ENCODE measurements at regions of chr11 and their contacts with region 1.

Region 1: GRCh38 chr11:12963792-12964536 is 45.2 kb upstream of the RASSF10 start:
- DNase-seq: peak; percentile 56 to 70
- ATAC-seq: peak; percentile 72 to 91 (median 85)
- H3K4me3 ChIP-seq: no peak overlapping the region
- H3K27ac ChIP-seq: no peak overlapping the region
- H3K4me1 ChIP-seq: no peaks in the 10 kb centered on the region
- H3K27me3 ChIP-seq: no peaks in the 10 kb centered on the region
- CTCF ChIP-seq: peak; percentile 82

Region 2: DNA sequence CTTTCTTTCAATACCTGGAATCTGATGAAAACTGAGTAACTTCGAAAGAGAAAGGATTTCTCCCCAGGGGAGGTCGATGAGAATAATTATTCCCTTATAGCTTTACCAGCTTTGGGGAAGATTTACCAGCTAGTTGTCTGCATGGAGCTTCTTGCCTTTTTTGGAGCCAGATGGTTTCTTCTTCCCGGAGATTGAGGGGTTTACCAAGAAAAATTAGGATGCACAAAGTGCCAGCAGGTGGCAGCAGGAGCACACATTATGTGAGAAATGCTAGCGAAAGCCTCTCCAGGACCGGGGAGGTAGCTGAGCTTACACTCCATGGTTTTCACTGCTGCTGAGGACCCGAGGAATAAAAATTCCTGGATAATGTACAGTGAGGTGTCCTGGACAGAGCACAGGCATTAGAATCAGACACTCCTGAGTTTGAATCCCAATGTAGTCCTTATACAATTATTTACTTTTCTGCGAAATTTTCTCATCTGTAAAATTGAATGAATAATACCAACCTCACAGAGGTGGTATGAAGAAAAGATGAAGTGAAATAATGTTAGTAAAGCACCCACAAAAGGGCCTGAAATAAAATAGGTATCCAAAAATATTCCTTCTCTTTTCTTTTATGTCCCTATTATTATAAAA is 632.6 kb before region 1 on chr11:
- intact Hi-C with region 1: loop called in 1 of 2 experiments (anchors 5 kb)
- DNase-seq: peak; percentile 79 to 89
- ATAC-seq: peak; percentile 80 to 93 (median 84)
- H3K4me3 ChIP-seq: no peak overlapping the region
- H3K27ac ChIP-seq: no peak overlapping the region
- H3K4me1 ChIP-seq: no peaks in the 10 kb centered on the region
- H3K27me3 ChIP-seq: no peaks in the 10 kb centered on the region
- CTCF ChIP-seq: peak; percentile 82

Region 3: GRCh38 chr11:13008625-13009475 is 44.9 kb after region 1 on chr11 and contains the start of gene RASSF10:
- intact Hi-C with region 1: no loop called
- DNase-seq: peak; percentile 41 to 59
- ATAC-seq: peak; percentile 39 to 81 (median 73)
- H3K4me3 ChIP-seq: peak within 1 kb of the TSS; percentile 65
- H3K27ac ChIP-seq: no peak within 1 kb of the TSS
- H3K4me1 ChIP-seq: peaks cover 17% of the 10 kb centered on the region
- H3K27me3 ChIP-seq: peaks cover 3 to 81% (median 29%) of the 10 kb centered on the region in 3 donors
- CTCF ChIP-seq: no peak
- total RNA-seq, gene RASSF10: 0.26 to 0.49 (median 0.37) TPM

Region 4: DNA sequence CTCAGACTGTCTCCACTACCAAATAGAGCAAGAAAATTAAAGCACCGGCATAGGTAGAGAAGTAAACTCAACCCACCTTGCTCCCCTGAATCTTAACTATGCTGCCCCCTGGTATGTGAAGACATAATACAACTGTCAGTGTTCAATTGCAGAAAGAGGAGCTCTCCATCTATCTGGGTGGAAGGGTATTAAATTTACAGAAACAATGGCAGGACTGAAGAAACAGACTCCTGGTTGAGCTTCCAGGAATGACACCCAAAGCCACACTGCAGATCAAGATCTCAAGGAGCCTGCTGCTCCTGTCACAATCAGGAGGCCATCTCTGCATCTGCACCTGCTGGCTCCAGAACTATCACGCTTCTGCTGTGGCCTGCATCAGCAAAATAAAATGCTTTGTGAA is 181.5 kb after region 1 on chr11:
- intact Hi-C with region 1: loop called (anchors 5 kb)
- DNase-seq: no peak
- ATAC-seq: no peak
- H3K4me3 ChIP-seq: no peak overlapping the region
- H3K27ac ChIP-seq: no peak overlapping the region
- H3K4me1 ChIP-seq: no peaks in the 10 kb centered on the region
- H3K27me3 ChIP-seq: no peaks in the 10 kb centered on the region
- CTCF ChIP-seq: no peak

Region 5: DNA sequence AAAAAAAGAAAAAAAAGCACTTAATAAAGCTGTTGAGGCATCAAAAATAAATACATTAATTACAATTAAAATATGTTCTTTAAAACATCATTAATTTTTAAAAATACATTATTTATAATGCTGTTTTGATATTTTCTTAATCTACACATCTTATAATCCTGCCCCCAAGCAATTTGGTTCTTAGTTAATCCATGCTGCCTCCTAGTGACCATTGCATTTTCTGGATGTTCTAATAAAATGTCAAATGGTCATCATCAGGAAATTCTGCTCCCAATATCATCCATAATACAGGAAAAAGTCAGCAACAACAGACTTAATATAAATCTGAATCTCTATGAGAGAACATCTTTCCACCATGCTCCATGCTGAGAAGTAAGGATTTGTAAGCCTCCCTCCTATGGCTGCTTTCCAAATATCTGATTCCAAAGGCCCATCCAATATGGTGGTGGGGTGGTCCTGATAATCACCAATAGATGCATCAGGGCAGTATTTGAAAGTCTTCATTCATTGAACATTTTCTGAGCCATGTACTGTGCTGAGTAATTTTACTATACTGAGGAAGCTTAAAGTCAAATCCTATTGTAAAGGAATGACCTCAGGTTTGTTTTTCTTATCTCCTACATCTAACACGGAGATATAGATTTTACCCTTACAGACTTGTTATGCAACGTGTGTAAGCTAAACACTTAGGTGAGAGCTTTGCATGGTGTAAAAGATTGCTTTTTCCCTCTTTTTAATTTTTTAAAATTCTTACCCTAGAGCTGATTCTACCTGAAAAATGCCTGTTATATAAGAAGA is 189.0 kb after region 1 on chr11:
- intact Hi-C with region 1: loop called (anchors 5 kb)
- DNase-seq: no peak
- ATAC-seq: no peak
- H3K4me3 ChIP-seq: no peak overlapping the region
- H3K27ac ChIP-seq: no peak overlapping the region
- H3K4me1 ChIP-seq: no peaks in the 10 kb centered on the region
- H3K27me3 ChIP-seq: no peaks in the 10 kb centered on the region
- CTCF ChIP-seq: peak; percentile 21

Region 6: GRCh38 chr11:13183094-13183825 is 219.3 kb after region 1 on chr11:
- intact Hi-C with region 1: loop called in 1 of 2 experiments (anchors 2 kb)
- DNase-seq: no peak
- ATAC-seq: peak in 2 of 4 donors; percentile 48 to 63
- H3K4me3 ChIP-seq: no peak overlapping the region
- H3K27ac ChIP-seq: no peak overlapping the region
- H3K4me1 ChIP-seq: no peaks in the 10 kb centered on the region
- H3K27me3 ChIP-seq: no peaks in the 10 kb centered on the region
- CTCF ChIP-seq: peak; percentile 40

Region 7: DNA sequence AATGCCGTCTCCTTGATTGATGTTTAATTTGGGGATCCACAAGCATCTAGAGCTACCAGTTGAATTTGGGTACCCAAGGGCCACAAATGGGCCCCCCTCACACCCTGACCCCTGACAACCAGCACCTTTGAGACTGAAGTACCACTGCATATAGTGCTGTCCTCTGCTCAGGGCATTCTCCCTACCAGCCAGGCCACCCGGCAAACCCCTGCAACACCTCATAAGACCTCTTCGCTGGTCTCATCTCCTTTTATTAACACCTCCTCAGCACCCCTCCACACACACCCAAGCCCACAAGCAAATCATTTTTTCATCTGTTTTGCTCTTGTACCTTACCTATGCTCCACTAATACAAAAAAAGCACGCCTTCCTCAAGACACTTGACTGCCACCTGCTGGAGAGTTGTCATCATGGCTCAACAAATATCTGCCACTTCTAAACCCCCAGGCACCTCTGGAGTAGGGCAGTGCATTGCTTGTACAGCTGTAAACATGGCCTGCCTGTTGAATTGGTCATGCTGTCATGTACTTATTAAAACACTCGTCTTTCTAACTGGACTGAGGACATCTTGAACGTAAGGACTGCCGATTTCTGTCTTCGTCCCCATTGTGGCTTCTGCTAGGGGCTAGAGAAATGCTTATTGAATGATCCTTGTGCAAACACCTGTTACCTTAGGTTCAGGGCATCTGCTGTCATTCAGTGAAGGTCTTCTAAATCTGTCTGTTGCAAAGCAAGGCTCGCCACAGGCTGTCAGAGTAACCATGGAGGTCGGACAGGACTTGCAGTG is 380.2 kb after region 1 on chr11:
- intact Hi-C with region 1: loop called (anchors 5 kb)
- DNase-seq: peak; percentile 45 to 70
- ATAC-seq: peak; percentile 57 to 83 (median 72)
- H3K4me3 ChIP-seq: no peak overlapping the region
- H3K27ac ChIP-seq: no peak overlapping the region
- H3K4me1 ChIP-seq: peaks cover 7% of the 10 kb centered on the region
- H3K27me3 ChIP-seq: no peaks in the 10 kb centered on the region
- CTCF ChIP-seq: peak; percentile 80